Heart left ventricle (tissue), 16 donors: ENCODE measurements at regions of chr5 and their contacts with region 1.

Region 1: GRCh38 chr5:1401536-1402138 is 43.6 kb downstream of the SLC6A3 start:
- DNase-seq: peak in 1 of 5 donors; percentile 49
- ATAC-seq: peak in 1 of 4 donors; percentile 24
- H3K4me3 ChIP-seq: no peak overlapping the region
- H3K27ac ChIP-seq: no peak overlapping the region
- H3K4me1 ChIP-seq: no peaks in the 10 kb centered on the region
- H3K27me3 ChIP-seq: peaks cover 0 to 14% (median 0%) of the 10 kb centered on the region in 9 donors
- CTCF ChIP-seq: no peak
- POLR2A ChIP-seq: no peak

Region 2: DNA sequence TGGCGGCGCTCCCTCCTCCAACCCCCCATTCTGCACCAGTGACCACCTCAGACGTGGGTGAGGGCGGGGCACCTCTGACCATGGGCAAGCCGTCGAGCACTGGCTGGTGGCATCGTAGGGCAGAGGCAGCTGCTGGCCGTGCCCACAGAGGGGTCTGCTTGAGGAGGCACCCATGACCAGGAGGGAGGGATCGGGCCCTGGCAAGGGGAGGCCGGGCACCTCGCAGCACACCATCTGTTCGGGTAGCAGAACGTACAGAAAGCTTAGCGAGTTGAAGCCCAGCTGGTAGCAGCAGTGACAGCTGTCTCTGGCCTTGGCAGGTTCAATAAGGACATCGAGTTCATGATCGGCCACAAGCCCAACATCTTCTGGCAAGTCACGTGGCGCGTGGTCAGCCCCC is 180.8 kb before region 1 on chr5:
- intact Hi-C with region 1: loop called in 1 of 10 experiments (anchors 5 kb)
- DNase-seq: no peak
- ATAC-seq: no peak
- H3K4me3 ChIP-seq: no peak overlapping the region
- H3K27ac ChIP-seq: no peak overlapping the region
- H3K4me1 ChIP-seq: no peaks in the 10 kb centered on the region
- H3K27me3 ChIP-seq: peaks cover 0 to 9% (median 0%) of the 10 kb centered on the region in 9 donors
- CTCF ChIP-seq: no peak
- POLR2A ChIP-seq: no peak